Endothelial cell of umbilical vein (primary cell): ENCODE measurements at regions of chr3 and their contacts with region 1.

Region 1: DNA sequence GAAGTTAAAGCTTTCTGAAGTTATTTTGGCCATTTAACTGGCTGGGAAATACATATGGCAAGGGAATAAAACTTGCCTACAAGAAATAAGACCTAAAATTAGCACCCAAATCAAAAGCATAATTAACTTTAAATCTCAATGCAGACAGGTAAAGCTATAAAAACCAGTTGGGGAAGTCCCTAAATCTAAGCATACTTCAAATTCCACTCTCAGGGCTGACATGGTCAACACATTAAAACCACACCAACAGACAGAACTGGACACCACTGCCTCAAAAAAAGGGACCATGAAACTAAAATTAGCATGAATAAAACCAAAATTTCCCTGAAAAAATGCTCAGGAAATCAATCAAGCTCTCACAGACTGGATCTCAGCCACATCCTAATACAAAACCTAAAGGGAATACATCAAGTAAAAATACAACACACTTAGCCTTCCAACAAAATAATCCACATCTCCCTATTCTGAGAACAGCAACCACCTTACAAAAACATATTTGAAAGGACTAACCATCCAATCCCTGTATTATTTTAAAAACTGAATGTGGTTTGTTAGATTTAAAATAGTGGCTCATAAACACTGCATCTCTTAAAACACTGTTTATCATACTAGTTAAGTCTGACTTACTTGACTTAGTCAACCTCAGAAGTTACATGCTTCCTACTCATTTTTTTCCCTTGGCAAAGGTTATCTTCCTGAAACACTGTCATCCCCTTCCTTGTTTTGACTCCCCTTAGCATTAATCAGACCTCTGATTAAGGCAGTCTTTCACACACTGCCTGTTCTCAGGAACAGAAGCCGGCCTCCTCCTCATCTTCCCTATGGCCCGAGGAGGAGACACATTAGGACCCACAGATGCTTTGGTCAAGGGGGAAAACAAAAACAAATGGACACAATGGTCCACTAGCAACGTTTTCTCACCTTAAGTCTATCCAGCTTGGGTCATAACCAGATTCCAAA is 8.3 kb downstream of the TRA2B start:
- DNase-seq: peak; percentile 76
- H3K4me3 ChIP-seq: peak overlapping the region in 1 of 3 experiments; percentile 35
- H3K27ac ChIP-seq: peak overlapping the region; percentile 4
- H3K4me1 ChIP-seq: peaks cover 74% of the 10 kb centered on the region
- H3K27me3 ChIP-seq: no peaks in the 10 kb centered on the region
- CTCF ChIP-seq: no peak
- POLR2A ChIP-seq: peak; percentile 48

Region 2: GRCh38 chr3:185824476-185825378 is 104.7 kb before region 1 on chr3 and contains the start of gene IGF2BP2:
- CTCF ChIA-PET with region 1: no interaction called
- POLR2A ChIA-PET with region 1: no interaction called
- dilution Hi-C with region 1: no loop called
- intact Hi-C with region 1: loop called (anchors 2 kb)
- DNase-seq: peak; percentile 84
- H3K4me3 ChIP-seq: peak within 1 kb of the TSS; percentile 87 to 100 (median 98)
- H3K27ac ChIP-seq: peak within 1 kb of the TSS; percentile 84
- H3K4me1 ChIP-seq: peaks cover 32% of the 10 kb centered on the region
- H3K27me3 ChIP-seq: no peaks in the 10 kb centered on the region
- CTCF ChIP-seq: peak in 1 of 2 donors; percentile 11
- POLR2A ChIP-seq: peak; percentile 69
- total RNA-seq, gene IGF2BP2: 122 and 130 TPM in 2 replicates

Region 3: DNA sequence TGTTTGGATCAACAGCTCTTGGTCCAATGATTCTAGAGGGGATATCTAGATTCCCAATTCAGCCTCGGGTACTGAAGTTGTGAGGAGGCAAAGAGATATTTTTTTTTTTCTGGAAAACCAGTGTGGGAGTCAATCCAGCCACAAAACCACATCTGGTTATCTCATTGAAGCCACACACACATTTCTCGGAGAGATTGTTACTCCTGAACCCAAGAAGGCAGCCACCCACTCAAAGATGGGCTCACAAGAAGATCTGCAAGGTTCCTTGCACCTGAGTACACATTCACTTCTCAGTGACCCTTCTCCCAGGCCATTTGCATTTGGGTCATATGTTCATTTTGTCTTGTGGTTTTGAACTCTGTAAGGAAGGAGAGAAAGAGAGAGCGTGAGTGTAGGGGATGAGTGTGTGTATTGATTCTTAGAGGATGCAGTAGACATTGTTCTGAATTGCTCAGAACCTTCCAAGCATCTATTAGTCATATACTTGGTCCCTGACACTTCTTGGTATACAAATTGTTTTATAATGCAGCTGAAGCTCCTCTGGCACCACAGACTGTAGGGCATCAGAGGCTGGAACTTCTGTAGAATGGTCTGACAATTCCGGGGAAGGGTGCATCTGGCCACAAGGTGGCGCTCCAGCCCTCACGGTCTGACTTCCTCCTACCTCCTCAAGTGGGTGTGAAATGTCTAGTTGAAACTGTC is 47.7 kb after region 1 on chr3:
- CTCF ChIA-PET with region 1: no interaction called
- POLR2A ChIA-PET with region 1: no interaction called
- dilution Hi-C with region 1: no loop called
- intact Hi-C with region 1: no loop called
- DNase-seq: peak; percentile 75
- H3K4me3 ChIP-seq: no peak overlapping the region
- H3K27ac ChIP-seq: no peak overlapping the region
- H3K4me1 ChIP-seq: peaks cover 6% of the 10 kb centered on the region
- H3K27me3 ChIP-seq: no peaks in the 10 kb centered on the region
- CTCF ChIP-seq: peak; percentile 85 to 93
- POLR2A ChIP-seq: no peak

Region 4: GRCh38 chr3:186152889-186153292 is 223.4 kb after region 1 on chr3:
- CTCF ChIA-PET with region 1: no interaction called
- POLR2A ChIA-PET with region 1: no interaction called
- dilution Hi-C with region 1: no loop called
- intact Hi-C with region 1: no loop called
- DNase-seq: no peak
- H3K4me3 ChIP-seq: no peak overlapping the region
- H3K27ac ChIP-seq: no peak overlapping the region
- H3K4me1 ChIP-seq: no peaks in the 10 kb centered on the region
- H3K27me3 ChIP-seq: no peaks in the 10 kb centered on the region
- CTCF ChIP-seq: no peak
- POLR2A ChIP-seq: no peak